Pancreas (tissue), 10 donors: ENCODE measurements at regions of chr2 and their contacts with region 1.

Region 1: DNA sequence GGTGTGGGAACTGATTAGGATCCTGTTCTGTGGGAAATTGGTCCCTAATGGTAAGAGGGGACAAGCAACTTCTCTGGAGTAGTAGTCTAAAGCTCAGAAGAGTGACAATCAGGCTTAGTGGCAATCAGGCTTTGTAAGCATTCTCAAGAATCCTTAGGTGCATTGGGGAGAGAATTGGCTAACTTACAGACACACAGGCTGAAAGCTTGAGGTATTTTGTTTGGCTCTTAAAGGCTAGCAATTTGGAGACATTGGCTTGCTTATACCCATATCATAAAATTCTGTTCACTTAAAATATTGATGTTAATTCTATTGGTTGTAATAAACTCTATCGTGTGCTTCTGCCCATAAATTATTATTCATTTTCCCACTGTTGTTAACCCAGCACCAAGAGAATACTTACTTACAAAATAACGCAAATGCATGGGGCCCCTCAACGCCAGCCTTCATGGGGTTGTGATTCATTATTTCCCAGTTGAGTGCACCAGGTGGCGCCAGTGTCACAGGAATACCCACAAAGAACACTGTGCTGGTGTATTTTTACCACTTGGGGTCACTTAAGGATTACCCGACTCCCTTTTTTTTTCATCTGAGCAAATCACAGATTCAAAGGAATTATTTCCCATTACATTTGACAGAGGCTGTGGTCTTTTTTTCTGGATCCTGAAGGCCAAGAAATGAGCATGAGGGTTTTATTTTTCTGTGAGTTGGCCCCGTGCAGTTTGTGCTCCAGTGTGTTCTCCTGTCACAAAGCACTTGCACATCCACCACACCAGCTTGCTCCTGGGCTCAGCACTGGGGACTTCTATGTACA is 45.5 kb downstream of the DDX1 start:
- DNase-seq: peak in 4 of 6 donors; percentile 31 to 72 (median 50)
- ATAC-seq: peak; percentile 70 to 94 (median 88)
- H3K4me3 ChIP-seq: no peak overlapping the region
- H3K27ac ChIP-seq: no peak overlapping the region
- H3K4me1 ChIP-seq: peaks cover 0 to 4% (median 0%) of the 10 kb centered on the region in 3 donors
- H3K27me3 ChIP-seq: no peaks in the 10 kb centered on the region
- CTCF ChIP-seq: peak; percentile 39 to 75 (median 70)

Region 2: DNA sequence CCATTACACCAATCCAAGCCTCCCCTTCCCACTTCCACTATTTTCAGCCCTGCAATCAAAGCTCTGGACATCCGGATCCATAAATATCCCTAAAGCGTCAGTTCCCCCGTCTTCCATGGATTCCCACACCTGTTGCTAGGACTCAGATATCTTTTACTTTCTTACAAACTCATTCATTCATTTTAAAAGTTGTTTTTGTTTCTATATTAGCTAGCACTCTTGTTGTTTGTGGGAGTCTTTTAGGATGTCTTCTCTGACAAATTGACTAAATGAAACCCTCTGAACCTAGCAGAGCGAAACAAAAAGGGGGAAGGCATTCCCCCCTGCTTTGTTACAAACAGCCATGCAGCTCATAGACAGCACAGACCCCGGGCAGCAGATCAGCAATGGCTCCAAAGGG is 67.1 kb before region 1 on chr2:
- intact Hi-C with region 1: no loop called
- DNase-seq: no peak
- ATAC-seq: no peak
- H3K4me3 ChIP-seq: no peak overlapping the region
- H3K27ac ChIP-seq: no peak overlapping the region
- H3K4me1 ChIP-seq: no peaks in the 10 kb centered on the region
- H3K27me3 ChIP-seq: no peaks in the 10 kb centered on the region
- CTCF ChIP-seq: no peak

Region 3: DNA sequence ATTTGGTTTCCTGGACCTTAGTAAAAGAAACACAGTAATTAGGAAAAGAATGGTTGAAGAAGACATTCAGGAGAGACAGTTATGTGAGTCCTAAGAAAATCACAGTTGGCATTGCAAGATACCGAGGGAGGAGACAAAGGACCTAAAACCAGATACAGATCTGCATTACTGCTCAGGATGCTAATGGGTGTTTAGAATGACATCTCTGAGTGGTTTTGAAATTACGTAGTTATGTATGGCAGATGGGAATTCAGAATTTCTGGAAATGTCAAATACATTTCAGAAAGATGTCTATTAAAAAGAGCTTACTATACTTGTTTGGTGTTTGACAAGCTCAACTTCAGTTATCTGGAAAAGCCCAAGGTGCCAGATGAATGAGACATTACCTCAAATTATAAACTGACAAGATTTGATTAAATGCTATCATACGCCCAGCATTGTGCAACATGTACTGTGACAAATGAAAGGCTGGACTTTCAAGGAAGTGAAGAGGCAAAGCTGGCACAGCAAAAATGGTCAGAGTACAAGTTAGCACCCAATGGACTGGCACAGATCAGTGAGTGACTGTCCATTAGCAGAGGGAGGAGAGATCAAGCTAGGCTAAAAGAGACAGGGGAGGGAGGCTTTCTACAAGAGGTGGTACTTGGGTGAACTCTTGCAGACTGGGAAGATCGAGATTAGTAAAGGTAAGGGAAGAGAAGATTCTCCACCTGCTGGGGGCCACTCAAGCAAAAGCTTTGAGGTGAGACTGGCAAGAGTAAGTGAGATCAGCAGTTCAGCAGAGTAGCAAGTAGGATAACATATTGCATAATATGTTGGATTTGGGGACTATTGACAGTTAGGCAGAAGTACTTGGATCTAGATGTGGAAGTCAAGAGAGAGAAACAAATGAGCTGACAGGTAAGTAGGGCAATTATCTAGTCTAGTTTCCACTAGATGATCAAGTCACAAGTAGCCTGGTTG is 859.5 kb after region 1 on chr2:
- intact Hi-C with region 1: loop called in 1 of 3 experiments (anchors 10 kb)
- DNase-seq: no peak
- ATAC-seq: peak in 3 of 4 donors; percentile 38 to 74 (median 71)
- H3K4me3 ChIP-seq: no peak overlapping the region
- H3K27ac ChIP-seq: no peak overlapping the region
- H3K4me1 ChIP-seq: no peaks in the 10 kb centered on the region
- H3K27me3 ChIP-seq: no peaks in the 10 kb centered on the region
- CTCF ChIP-seq: no peak

Region 4: GRCh38 chr2:16608661-16609643 is 971.8 kb after region 1 on chr2:
- intact Hi-C with region 1: loop called in 1 of 3 experiments (anchors 10 kb)
- DNase-seq: peak; percentile 60 to 94 (median 80)
- ATAC-seq: peak; percentile 86 to 98 (median 96)
- H3K4me3 ChIP-seq: peak overlapping the region in 3 of 4 donors; percentile 4 to 43 (median 27)
- H3K27ac ChIP-seq: peak overlapping the region in 1 of 4 donors; percentile 9
- H3K4me1 ChIP-seq: no peaks in the 10 kb centered on the region
- H3K27me3 ChIP-seq: no peaks in the 10 kb centered on the region
- CTCF ChIP-seq: peak; percentile 83 to 91 (median 90)